ENCODE measurements at regions of chr7 and their contacts with region 1.

Region 1: DNA sequence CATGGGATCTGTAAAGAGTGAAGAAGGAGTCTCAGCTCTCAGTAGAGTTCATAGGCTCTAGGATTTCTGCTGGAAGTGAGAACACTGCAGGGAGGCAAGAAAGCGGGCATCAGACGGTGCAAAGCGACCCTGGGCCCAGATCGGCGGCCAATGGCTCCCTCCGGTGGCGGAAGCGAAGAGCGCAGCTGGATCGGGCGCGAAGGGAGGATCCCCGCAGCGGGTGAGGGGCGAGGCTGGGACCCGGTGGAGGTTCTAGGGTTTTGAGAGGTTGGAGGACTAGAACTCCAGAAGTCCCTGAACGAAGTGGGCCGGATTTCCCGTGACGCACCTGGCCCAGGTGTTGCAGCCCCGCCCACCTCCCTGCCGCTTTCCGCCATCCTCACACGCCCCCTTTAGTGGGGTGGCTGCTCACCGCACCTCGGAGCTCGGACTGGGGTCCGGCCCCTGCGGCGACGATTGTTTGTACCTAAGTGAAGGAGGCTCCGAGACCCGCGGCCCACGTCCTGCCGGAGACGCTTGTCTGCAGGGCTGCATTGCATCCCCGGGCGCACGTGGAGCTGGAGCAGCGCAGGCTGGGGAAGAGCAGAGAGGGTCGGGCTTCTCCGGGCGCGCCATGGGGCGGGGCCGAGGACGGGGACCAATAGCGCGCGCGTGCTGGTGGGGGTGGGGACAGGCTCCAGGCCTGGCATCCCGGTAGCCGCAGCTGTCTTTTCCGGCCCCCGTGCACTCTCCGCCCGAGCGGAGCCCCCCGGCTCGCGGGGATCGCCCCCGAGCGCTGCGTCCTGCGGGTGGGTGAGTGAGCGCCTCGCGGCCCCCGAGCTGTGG is at the start of gene SLC12A9:
- DNase-seq: peak; percentile 86 to 98
- ATAC-seq: peak; percentile 98 to 99
- H3K4me3 ChIP-seq: peak within 1 kb of the TSS; percentile 77
- H3K27ac ChIP-seq: peak within 1 kb of the TSS; percentile 76 to 85
- H3K4me1 ChIP-seq: 0 out of 3 replicates have a peak, but pooled peaks cover 4% of the 10 kb centered on the region
- CTCF ChIP-seq: peak; percentile 95
- EP300 ChIP-seq: no peak
- POLR2A ChIP-seq: peak; percentile 48; the same call in 1 of the 2 replicates
- RAD21 ChIP-seq: peak; percentile 94 to 98
- polyA plus RNA-seq, gene SLC12A9: 6.2 and 7.0 TPM in 2 replicates

Region 2: GRCh38 chr7:100711369-100711768 is 140.9 kb before region 1 on chr7:
- CTCF ChIA-PET with region 1: interaction called, 280 read pairs
- POLR2A ChIA-PET with region 1: interaction called, 19 read pairs
- DNase-seq: no peak
- ATAC-seq: no peak
- H3K4me3 ChIP-seq: no peak overlapping the region
- H3K27ac ChIP-seq: no peak overlapping the region
- H3K4me1 ChIP-seq: peaks cover 8% of the 10 kb centered on the region
- CTCF ChIP-seq: no peak
- EP300 ChIP-seq: no peak
- POLR2A ChIP-seq: no peak
- RAD21 ChIP-seq: no peak

Region 3: DNA sequence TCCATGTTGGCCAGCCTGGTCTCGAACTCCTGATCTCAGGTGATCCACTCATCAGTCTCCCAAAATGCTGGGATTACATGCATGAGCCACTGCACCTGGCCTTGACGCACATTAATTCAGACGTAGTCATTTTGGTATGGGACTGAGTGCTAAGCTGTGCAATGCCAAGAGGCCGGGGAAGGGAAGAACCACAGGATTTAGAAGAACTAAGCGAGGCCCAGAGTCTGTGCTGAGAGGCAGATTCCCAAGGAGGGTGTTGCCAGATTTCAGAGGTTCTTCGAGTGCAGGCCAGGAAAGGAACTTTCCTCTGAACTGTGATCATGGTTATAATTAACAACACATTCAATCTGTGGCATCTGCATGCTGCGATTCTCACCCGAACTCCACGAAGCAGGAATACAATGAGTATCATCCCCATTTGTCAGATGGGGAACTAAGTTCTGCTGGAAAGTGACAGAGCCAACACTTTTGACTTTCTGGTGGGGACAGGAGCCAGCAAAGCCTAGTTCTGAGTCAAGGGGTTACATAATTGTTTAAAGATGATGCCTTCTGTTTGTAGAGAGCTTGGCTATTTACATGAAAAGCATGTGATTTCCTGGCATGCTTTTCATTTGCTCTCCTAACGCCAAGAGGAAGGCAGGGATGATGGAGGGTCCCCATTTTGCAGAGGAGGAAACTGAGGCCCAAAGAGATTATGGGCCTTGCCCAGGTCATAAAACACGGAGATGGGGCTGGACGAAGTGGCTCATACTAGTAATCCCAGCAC is 125.1 kb before region 1 on chr7:
- CTCF ChIA-PET with region 1: interaction called, 280 read pairs
- POLR2A ChIA-PET with region 1: no interaction called
- DNase-seq: no peak
- ATAC-seq: no peak
- H3K4me3 ChIP-seq: no peak overlapping the region
- H3K27ac ChIP-seq: no peak overlapping the region
- H3K4me1 ChIP-seq: peaks cover 23% of the 10 kb centered on the region
- CTCF ChIP-seq: no peak
- EP300 ChIP-seq: no peak
- POLR2A ChIP-seq: no peak
- RAD21 ChIP-seq: no peak

Region 4: DNA sequence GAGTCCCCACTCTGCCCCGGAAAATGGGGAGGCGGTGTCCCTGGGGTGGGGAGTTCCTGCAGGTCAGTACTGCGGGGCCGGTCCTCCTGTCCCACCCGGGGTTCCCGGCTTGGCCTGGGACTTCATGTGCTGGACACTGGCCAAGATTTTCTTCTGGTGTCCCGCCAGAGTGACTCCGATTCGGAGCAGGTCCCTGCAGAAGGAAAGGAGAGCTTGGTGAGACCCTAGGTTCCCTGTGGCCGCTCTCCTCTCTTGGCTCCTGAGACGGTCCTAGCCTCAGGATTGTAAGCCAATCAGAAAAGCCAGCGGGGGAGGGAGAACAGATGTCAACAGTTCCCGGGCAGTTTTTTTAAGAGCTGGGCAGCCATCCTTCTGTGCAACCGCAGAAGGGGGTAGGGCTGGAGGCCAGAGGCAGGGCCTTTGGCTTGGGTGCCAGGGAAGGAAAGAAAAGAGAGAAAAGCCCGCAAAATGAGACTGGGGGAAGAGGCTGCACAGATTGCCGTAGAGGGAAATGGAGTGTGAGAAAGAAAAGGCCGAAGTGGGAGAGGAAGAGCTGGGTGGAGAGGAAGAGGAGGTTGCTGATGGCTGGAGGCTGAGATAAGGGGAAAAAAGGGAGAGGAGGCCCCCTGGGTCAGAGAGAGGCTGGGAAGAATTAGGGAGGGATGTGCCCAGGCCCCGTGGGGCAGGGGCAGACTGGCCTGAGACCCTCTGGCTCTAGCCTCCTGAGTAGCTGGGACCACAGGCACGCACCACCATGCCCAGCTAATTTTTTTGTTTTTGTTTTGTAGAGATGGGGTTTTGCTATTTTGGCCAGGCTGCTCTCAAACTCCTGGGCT is 48.6 kb before region 1 on chr7:
- CTCF ChIA-PET with region 1: interaction called, 169 read pairs
- POLR2A ChIA-PET with region 1: interaction called, 9 read pairs
- DNase-seq: peak; percentile 76 to 78
- ATAC-seq: peak; percentile 35 to 74; a peak in 4 of 6 replicates
- H3K4me3 ChIP-seq: no peak overlapping the region
- H3K27ac ChIP-seq: peak overlapping the region; percentile 83 to 95
- H3K4me1 ChIP-seq: peaks cover 53% of the 10 kb centered on the region
- CTCF ChIP-seq: no peak
- EP300 ChIP-seq: no peak
- POLR2A ChIP-seq: no peak
- RAD21 ChIP-seq: no peak

Region 5: GRCh38 chr7:100837099-100837836 is 15.0 kb before region 1 on chr7:
- CTCF ChIA-PET with region 1: interaction called, 49 read pairs
- POLR2A ChIA-PET with region 1: no interaction called
- DNase-seq: peak; percentile 81 to 93
- ATAC-seq: peak; percentile 95 to 99
- H3K4me3 ChIP-seq: peak overlapping the region; percentile 45
- H3K27ac ChIP-seq: peak overlapping the region; percentile 85 to 89
- H3K4me1 ChIP-seq: peaks cover 14% of the 10 kb centered on the region
- CTCF ChIP-seq: no peak
- EP300 ChIP-seq: no peak
- POLR2A ChIP-seq: peak; percentile 50
- RAD21 ChIP-seq: no peak; a peak in 1 of 5 replicates

Region 6: GRCh38 chr7:100874577-100875355 is 22.5 kb after region 1 on chr7 and contains the start of gene SRRT:
- CTCF ChIA-PET with region 1: interaction called, 22 read pairs
- POLR2A ChIA-PET with region 1: interaction called, 12 read pairs
- DNase-seq: peak; percentile 95 to 99
- ATAC-seq: peak; percentile 92 to 97
- H3K4me3 ChIP-seq: peak within 1 kb of the TSS; percentile 98
- H3K27ac ChIP-seq: peak within 1 kb of the TSS; percentile 95 to 96
- H3K4me1 ChIP-seq: peaks cover 9% of the 10 kb centered on the region
- CTCF ChIP-seq: no peak
- EP300 ChIP-seq: no peak
- POLR2A ChIP-seq: peak; percentile 82
- RAD21 ChIP-seq: no peak
- polyA plus RNA-seq, gene SRRT: 49.9 and 52.2 TPM in 2 replicates

Region 7: GRCh38 chr7:100957832-100958421 is 105.7 kb after region 1 on chr7:
- CTCF ChIA-PET with region 1: no interaction called
- POLR2A ChIA-PET with region 1: no interaction called
- DNase-seq: peak in 1 of 2 experiments; percentile 35
- ATAC-seq: peak in 1 of 2 experiments; percentile 48; a peak in 3 of 6 replicates
- H3K4me3 ChIP-seq: no peak overlapping the region
- H3K27ac ChIP-seq: no peak overlapping the region
- H3K4me1 ChIP-seq: no peaks in the 10 kb centered on the region
- CTCF ChIP-seq: no peak
- EP300 ChIP-seq: no peak
- POLR2A ChIP-seq: 0 out of 2 replicates have a peak, but pooled peaks have one; percentile 9
- RAD21 ChIP-seq: no peak